T-cell (primary cell): ENCODE measurements at regions of chr20 and their contacts with region 1.

Region 1: GRCh38 chr20:34781220-34781619 is 44.2 kb downstream of the NCOA6 start:
- DNase-seq: no peak
- ATAC-seq: no peak
- H3K4me3 ChIP-seq: no peak overlapping the region
- H3K4me3 Mint-ChIP-seq: no peak overlapping the region
- H3K27ac ChIP-seq: no peak overlapping the region
- H3K27ac Mint-ChIP-seq: no peak overlapping the region
- H3K4me1 ChIP-seq: no peaks in the 10 kb centered on the region
- H3K4me1 Mint-ChIP-seq: peaks cover 0 to under 1% (median 0%) of the 10 kb centered on the region in 3 donors
- H3K27me3 ChIP-seq: no peaks in the 10 kb centered on the region
- H3K27me3 Mint-ChIP-seq: no peaks in the 10 kb centered on the region

Region 2: GRCh38 chr20:34663213-34663943 is 117.8 kb before region 1 on chr20:
- CTCF ChIA-PET with region 1: interaction called in 1 of 2 experiments, 10 read pairs
- POLR2A ChIA-PET with region 1: no interaction called
- DNase-seq: no peak
- ATAC-seq: no peak
- H3K4me3 ChIP-seq: no peak overlapping the region
- H3K4me3 Mint-ChIP-seq: no peak overlapping the region
- H3K27ac ChIP-seq: no peak overlapping the region
- H3K27ac Mint-ChIP-seq: no peak overlapping the region
- H3K4me1 ChIP-seq: peaks cover 0 to 3% of the 10 kb centered on the region in 2 experiments
- H3K4me1 Mint-ChIP-seq: peaks cover 5 to 11% (median 7%) of the 10 kb centered on the region in 3 donors
- H3K27me3 ChIP-seq: no peaks in the 10 kb centered on the region
- H3K27me3 Mint-ChIP-seq: no peaks in the 10 kb centered on the region

Region 3: DNA sequence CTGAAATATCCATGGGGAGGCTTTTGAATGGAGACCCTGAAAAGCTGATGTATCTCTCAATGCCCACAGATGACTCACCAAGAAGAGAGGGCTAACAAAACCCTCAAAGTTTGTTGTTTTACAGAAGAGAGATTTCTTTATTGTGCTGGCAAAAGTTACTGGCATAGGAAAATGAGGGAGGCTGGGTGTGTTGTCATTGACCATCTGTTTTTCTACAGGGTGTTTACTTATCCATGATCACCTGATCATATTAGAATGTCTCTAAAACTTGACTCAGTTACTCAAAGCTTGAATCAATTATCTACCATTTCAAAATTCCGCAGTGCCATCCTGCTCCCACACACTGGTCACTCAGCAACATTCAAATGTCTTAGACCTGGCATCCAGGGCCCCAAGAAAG is 34.4 kb after region 1 on chr20:
- CTCF ChIA-PET with region 1: no interaction called
- POLR2A ChIA-PET with region 1: no interaction called
- DNase-seq: no peak
- ATAC-seq: no peak
- H3K4me3 ChIP-seq: no peak overlapping the region
- H3K4me3 Mint-ChIP-seq: no peak overlapping the region
- H3K27ac ChIP-seq: no peak overlapping the region
- H3K27ac Mint-ChIP-seq: no peak overlapping the region
- H3K4me1 ChIP-seq: no peaks in the 10 kb centered on the region
- H3K4me1 Mint-ChIP-seq: peaks cover 40 to 53% (median 52%) of the 10 kb centered on the region in 3 donors
- H3K27me3 ChIP-seq: no peaks in the 10 kb centered on the region
- H3K27me3 Mint-ChIP-seq: no peaks in the 10 kb centered on the region